A673 (cell line): ENCODE measurements at regions of chr3 and their contacts with region 1.

Region 1: DNA sequence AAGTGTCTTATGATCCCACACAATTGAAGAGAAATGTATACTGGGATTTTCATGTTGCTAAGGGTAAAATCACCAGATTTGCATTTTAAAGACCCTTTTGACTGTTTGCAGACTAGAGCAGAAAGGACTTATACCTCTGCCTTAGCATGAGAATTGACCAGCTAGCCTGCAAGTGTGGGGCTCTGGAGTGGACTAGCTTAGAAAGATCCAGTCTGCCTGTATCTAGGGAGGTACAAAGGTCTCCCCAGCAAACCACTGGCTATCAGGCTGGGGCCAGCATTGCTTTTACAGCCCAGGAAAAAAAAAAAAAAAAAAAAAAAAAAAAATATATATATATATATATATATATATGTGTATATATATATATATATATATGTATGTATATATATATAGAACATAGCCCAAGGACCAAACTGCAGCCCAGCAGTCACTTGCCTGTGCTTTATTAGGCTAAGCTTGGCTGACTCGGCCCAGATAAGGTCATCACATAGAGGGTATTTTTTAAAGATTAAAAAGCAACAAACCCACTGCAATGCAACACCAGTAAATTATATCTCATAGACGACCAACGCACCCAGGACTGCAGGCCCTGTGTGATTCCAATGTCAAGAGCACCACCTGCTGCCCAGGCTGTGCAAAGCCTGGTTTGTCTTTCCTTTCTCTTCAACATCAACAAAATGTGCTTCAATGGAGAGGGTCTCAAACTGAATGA is 63.7 kb downstream of the DCLK3 start:
- DNase-seq: peak; percentile 87
- H3K4me3 ChIP-seq: no peak overlapping the region
- H3K27ac ChIP-seq: no peak overlapping the region
- H3K4me1 ChIP-seq: no peaks in the 10 kb centered on the region
- H3K27me3 ChIP-seq: no peaks in the 10 kb centered on the region
- CTCF ChIP-seq: peak; percentile 95

Region 2: DNA sequence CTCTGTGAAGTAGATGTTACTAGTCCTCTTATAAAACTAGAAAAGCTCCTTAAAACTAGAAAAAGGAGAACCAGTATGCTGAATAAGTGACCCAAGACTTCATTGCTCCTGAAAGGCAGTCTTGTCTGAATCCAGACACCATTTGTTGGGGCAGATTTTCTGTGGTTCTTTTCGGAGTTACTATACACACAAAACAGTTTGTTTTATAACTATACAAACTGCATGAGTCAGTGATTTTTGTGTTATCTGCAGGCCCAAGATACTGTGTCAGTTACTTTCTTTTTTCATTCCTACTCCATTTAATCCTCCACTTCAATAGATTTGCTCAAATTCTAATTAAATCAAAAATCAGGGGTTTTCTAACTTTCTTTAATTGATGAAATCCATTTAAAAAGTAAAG is 816.8 kb before region 1 on chr3:
- CTCF ChIA-PET with region 1: no interaction called
- POLR2A ChIA-PET with region 1: no interaction called
- intact Hi-C with region 1: no loop called
- DNase-seq: no peak
- H3K4me3 ChIP-seq: no peak overlapping the region
- H3K27ac ChIP-seq: no peak overlapping the region
- H3K4me1 ChIP-seq: no peaks in the 10 kb centered on the region
- H3K27me3 ChIP-seq: no peaks in the 10 kb centered on the region
- CTCF ChIP-seq: no peak

Region 3: GRCh38 chr3:35965908-35966307 is 734.8 kb before region 1 on chr3:
- CTCF ChIA-PET with region 1: no interaction called
- POLR2A ChIA-PET with region 1: no interaction called
- intact Hi-C with region 1: loop called (anchors 1 kb)
- DNase-seq: peak; percentile 72
- H3K4me3 ChIP-seq: no peak overlapping the region
- H3K27ac ChIP-seq: no peak overlapping the region
- H3K4me1 ChIP-seq: peaks cover 39% of the 10 kb centered on the region
- H3K27me3 ChIP-seq: no peaks in the 10 kb centered on the region
- CTCF ChIP-seq: peak; percentile 76

Region 4: GRCh38 chr3:36124118-36124796 is 576.4 kb before region 1 on chr3:
- CTCF ChIA-PET with region 1: no interaction called
- POLR2A ChIA-PET with region 1: no interaction called
- intact Hi-C with region 1: loop called (anchors 10 kb)
- DNase-seq: peak; percentile 20
- H3K4me3 ChIP-seq: no peak overlapping the region
- H3K27ac ChIP-seq: no peak overlapping the region
- H3K4me1 ChIP-seq: no peaks in the 10 kb centered on the region
- H3K27me3 ChIP-seq: no peaks in the 10 kb centered on the region
- CTCF ChIP-seq: peak; percentile 33; the same call in 1 of the 2 replicates

Region 5: GRCh38 chr3:36408146-36408545 is 292.5 kb before region 1 on chr3:
- CTCF ChIA-PET with region 1: no interaction called
- POLR2A ChIA-PET with region 1: no interaction called
- intact Hi-C with region 1: loop called (anchors 2 kb)
- DNase-seq: peak; percentile 10
- H3K4me3 ChIP-seq: no peak overlapping the region
- H3K27ac ChIP-seq: no peak overlapping the region
- H3K4me1 ChIP-seq: no peaks in the 10 kb centered on the region
- H3K27me3 ChIP-seq: no peaks in the 10 kb centered on the region
- CTCF ChIP-seq: peak; percentile 45

Region 6: DNA sequence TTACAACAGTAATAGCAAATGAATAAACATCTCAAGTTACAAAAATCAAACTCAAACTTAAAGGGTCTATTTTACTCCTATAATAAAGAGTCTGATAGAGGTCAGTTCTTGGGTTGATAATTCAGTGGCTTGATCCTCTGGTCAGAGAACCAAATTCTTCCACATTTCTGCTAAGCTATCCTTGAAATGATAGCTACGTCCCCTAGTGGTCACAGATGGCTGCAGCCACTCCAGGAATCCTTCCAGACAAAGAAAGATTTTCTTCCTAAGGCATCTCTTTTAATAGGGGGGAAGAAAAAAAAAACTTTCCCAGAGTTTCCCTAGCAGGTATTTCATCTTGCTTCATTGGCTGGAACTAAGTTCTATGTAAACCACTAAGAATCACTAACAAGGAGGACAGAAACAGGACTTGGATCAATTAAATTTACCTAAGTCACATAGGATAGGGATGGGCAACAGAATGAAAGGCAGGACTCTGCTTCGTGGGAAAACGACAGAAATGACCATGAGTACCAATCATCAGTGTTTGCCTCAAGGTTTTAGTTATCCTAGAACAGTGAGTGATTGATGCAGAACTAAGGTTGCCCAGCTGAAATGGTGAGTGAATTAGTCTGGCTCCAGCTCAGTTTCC is 159.7 kb before region 1 on chr3:
- CTCF ChIA-PET with region 1: no interaction called
- POLR2A ChIA-PET with region 1: no interaction called
- intact Hi-C with region 1: loop called (anchors 10 kb)
- DNase-seq: peak; percentile 38
- H3K4me3 ChIP-seq: no peak overlapping the region
- H3K27ac ChIP-seq: no peak overlapping the region
- H3K4me1 ChIP-seq: no peaks in the 10 kb centered on the region
- H3K27me3 ChIP-seq: no peaks in the 10 kb centered on the region
- CTCF ChIP-seq: peak; percentile 87

Region 7: DNA sequence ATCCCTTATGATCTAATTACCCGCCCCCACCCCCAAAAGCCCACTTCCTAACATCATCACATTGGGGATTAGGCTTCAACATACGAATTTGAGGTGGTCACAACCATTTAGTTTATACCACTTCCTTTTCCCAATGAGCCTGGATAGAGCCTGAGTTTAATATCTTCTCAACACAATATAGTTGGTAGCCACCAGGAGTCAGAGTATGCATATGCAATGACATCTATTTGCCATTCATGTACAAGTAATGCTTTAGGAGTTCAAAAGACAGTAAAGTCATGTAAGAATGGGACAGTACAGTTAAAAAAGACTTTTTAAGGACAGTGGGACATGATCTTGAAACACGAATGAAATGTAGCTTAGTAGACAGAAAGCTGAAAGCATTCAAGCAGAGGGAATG is 108.7 kb before region 1 on chr3:
- CTCF ChIA-PET with region 1: no interaction called
- POLR2A ChIA-PET with region 1: no interaction called
- intact Hi-C with region 1: loop called (anchors 5 kb)
- DNase-seq: no peak
- H3K4me3 ChIP-seq: no peak overlapping the region
- H3K27ac ChIP-seq: no peak overlapping the region
- H3K4me1 ChIP-seq: no peaks in the 10 kb centered on the region
- H3K27me3 ChIP-seq: no peaks in the 10 kb centered on the region
- CTCF ChIP-seq: 0 out of 2 replicates have a peak, but pooled peaks have one; percentile 18

Region 8: GRCh38 chr3:36814776-36815175 is 114.1 kb after region 1 on chr3:
- CTCF ChIA-PET with region 1: no interaction called
- POLR2A ChIA-PET with region 1: no interaction called
- intact Hi-C with region 1: no loop called
- DNase-seq: no peak
- H3K4me3 ChIP-seq: no peak overlapping the region
- H3K27ac ChIP-seq: no peak overlapping the region
- H3K4me1 ChIP-seq: no peaks in the 10 kb centered on the region
- H3K27me3 ChIP-seq: no peaks in the 10 kb centered on the region
- CTCF ChIP-seq: peak; percentile 39; the same call in 1 of the 2 replicates